HepG2 (cell line): ENCODE measurements at regions of chr19 and their contacts with region 1.

Region 1: GRCh38 chr19:46954993-46955812 is 64.4 kb upstream of the NPAS1 start:
- DNase-seq: peak; percentile 27
- ATAC-seq: no peak
- H3K4me3 ChIP-seq: peak overlapping the region; percentile 7 to 61 (median 25); a peak in 4 of 6 replicates
- H3K27ac ChIP-seq: peak overlapping the region; percentile 99
- H3K4me1 ChIP-seq: peaks cover 96% of the 10 kb centered on the region
- H3K27me3 ChIP-seq: no peaks in the 10 kb centered on the region
- CTCF ChIP-seq: no peak
- EP300 ChIP-seq: no peak
- POLR2A ChIP-seq: no peak
- RAD21 ChIP-seq: no peak

Region 2: DNA sequence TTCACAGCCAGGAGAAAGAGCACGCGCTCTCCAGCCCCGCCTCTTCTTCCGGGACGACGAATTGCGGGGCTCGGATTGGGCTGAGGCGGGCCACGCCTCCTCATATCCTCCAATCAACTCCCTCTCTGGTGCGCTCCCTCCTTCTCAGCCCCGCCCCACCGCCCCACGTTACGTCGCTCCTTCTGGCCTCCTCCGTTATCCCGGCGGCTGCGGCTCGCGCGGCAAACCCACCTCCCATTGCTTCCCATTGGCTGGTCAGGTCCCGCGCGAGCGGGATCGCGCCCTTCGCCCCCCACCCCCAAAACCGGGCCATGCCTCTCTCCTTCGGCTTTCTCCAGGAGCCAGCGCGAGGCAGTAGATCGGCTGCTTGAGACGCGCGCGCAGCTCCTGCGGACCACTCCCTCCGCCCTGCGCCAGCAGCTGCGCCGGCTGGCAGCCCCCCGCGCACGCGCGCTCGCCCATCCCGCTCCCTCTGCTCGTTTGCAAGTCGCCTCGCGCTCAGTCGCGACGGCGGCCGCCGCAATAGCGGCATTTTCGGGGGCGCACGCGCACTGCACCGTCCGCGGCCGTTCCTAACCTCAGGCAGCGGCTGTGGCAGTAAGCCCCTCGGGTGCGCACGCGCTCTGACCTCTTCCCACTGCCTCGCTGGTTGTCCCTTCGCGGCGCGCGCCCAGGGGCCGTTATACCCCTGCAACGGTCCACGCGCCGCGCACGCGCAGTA is 94.9 kb before region 1 on chr19:
- CTCF ChIA-PET with region 1: no interaction called
- POLR2A ChIA-PET with region 1: interaction called, 10 read pairs
- in situ Hi-C with region 1: no loop called
- intact Hi-C with region 1: loop called (anchors 5 kb)
- DNase-seq: peak; percentile 96
- ATAC-seq: peak; percentile 74
- H3K4me3 ChIP-seq: peak overlapping the region; percentile 67 to 83 (median 70); a peak in 5 of 6 replicates
- H3K27ac ChIP-seq: peak overlapping the region; percentile 100
- H3K4me1 ChIP-seq: peaks cover 62% of the 10 kb centered on the region
- H3K27me3 ChIP-seq: no peaks in the 10 kb centered on the region; a peak in 1 of 5 replicates
- CTCF ChIP-seq: 0 out of 2 replicates have a peak, but pooled peaks have one; percentile 16
- EP300 ChIP-seq: no peak; a peak in 1 of 4 replicates
- POLR2A ChIP-seq: peak; percentile 85 to 95
- RAD21 ChIP-seq: peak; percentile 79

Region 3: GRCh38 chr19:46890423-46891170 is 64.6 kb before region 1 on chr19:
- CTCF ChIA-PET with region 1: no interaction called
- POLR2A ChIA-PET with region 1: interaction called, 12 read pairs
- in situ Hi-C with region 1: no loop called
- intact Hi-C with region 1: no loop called
- DNase-seq: peak; percentile 99
- ATAC-seq: peak; percentile 97
- H3K4me3 ChIP-seq: peak overlapping the region in 2 of 3 experiments; percentile 8 to 42; a peak in 1 of 6 replicates
- H3K27ac ChIP-seq: peak overlapping the region; percentile 85
- H3K4me1 ChIP-seq: peaks cover 84% of the 10 kb centered on the region
- H3K27me3 ChIP-seq: no peaks in the 10 kb centered on the region
- CTCF ChIP-seq: peak; percentile 53
- EP300 ChIP-seq: peak; percentile 72 to 91; a peak in 3 of 4 replicates
- POLR2A ChIP-seq: peak; percentile 25 to 40; a peak in 2 of 4 replicates
- RAD21 ChIP-seq: peak; percentile 67

Region 4: DNA sequence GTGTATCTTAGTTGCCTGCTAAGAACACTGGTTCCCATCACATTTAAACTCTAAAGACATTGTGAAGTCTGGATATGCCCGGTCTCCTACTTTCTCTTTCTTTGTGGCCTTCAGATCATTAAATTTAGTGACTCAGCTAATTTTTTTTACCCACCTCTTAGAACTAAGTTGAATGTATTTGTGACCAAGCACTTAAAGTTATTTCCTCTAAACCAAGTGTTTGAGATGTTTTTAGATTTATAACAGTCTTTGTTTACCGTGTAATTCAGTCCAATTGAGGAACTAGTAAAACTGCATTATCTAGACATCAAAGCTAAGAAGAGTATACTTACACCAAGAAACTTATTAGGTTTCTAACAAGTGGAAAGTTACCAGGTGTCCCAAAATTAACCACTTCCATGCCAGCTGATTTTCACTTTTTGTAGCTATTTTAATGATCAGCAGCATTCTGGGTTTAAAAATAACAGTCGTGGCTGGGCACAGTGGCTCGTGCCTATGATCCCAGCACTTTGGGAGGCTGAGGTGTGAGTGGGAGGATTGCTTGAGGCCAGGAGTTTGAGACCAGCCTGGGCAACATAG is 41.3 kb before region 1 on chr19:
- CTCF ChIA-PET with region 1: no interaction called
- POLR2A ChIA-PET with region 1: no interaction called
- in situ Hi-C with region 1: no loop called
- intact Hi-C with region 1: no loop called
- DNase-seq: no peak
- ATAC-seq: no peak
- H3K4me3 ChIP-seq: no peak overlapping the region
- H3K27ac ChIP-seq: peak overlapping the region; percentile 20
- H3K4me1 ChIP-seq: peaks cover 59% of the 10 kb centered on the region
- H3K27me3 ChIP-seq: no peaks in the 10 kb centered on the region
- CTCF ChIP-seq: no peak
- EP300 ChIP-seq: no peak
- POLR2A ChIP-seq: no peak
- RAD21 ChIP-seq: no peak

Region 5: DNA sequence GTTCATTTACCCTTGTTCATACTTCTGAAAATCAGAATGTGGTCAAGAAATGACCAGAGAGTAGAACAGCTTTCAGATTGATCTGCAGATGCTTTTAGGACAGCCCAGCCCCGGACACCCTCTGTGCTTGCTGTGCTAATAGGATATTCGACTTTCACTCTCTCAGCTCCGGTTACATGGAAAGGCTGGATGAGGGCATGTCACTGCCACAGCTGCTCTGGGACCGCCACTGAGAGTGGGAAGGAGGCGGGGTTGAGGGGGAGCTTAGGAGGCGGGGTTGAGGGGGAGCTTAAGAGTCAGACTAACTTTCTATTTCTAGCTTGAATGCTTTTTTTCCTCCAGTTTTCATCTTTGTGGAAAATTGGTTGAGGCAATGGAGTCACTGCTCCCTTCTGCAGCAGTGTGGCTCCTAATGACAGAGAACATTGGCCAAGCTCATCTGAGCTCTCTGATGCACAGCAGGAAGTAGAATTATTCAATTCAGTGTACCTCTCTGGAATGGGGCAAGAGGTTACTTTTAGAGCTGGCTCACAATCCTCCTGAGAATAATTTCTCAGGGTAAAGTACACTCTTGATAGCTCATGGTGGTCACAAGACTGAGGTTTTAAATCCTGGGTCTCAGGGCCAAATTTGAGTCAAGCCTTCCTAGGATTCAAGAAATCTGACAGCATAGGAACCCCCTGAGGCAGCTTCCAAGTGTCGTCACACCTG is 10.1 kb before region 1 on chr19:
- CTCF ChIA-PET with region 1: no interaction called
- POLR2A ChIA-PET with region 1: interaction called, 28 read pairs
- in situ Hi-C with region 1: no loop called
- intact Hi-C with region 1: no loop called
- DNase-seq: no peak
- ATAC-seq: peak; percentile 54
- H3K4me3 ChIP-seq: no peak overlapping the region
- H3K27ac ChIP-seq: peak overlapping the region; percentile 58
- H3K4me1 ChIP-seq: peaks cover 80% of the 10 kb centered on the region
- H3K27me3 ChIP-seq: no peaks in the 10 kb centered on the region
- CTCF ChIP-seq: no peak
- EP300 ChIP-seq: no peak
- POLR2A ChIP-seq: no peak
- RAD21 ChIP-seq: no peak

Region 6: GRCh38 chr19:46970815-46971214 is 15.6 kb after region 1 on chr19:
- CTCF ChIA-PET with region 1: no interaction called
- POLR2A ChIA-PET with region 1: no interaction called
- in situ Hi-C with region 1: no loop called
- intact Hi-C with region 1: no loop called
- DNase-seq: no peak
- ATAC-seq: no peak
- H3K4me3 ChIP-seq: no peak overlapping the region
- H3K27ac ChIP-seq: no peak overlapping the region
- H3K4me1 ChIP-seq: peaks cover 23% of the 10 kb centered on the region
- H3K27me3 ChIP-seq: no peaks in the 10 kb centered on the region
- CTCF ChIP-seq: no peak
- EP300 ChIP-seq: no peak
- POLR2A ChIP-seq: no peak
- RAD21 ChIP-seq: no peak

Region 7: GRCh38 chr19:46984077-46985010 is 29.1 kb after region 1 on chr19:
- CTCF ChIA-PET with region 1: no interaction called
- POLR2A ChIA-PET with region 1: interaction called, 13 read pairs
- in situ Hi-C with region 1: no loop called
- intact Hi-C with region 1: loop called (anchors 1 kb)
- DNase-seq: peak; percentile 90
- ATAC-seq: peak; percentile 88
- H3K4me3 ChIP-seq: peak overlapping the region in 2 of 3 experiments; percentile 8 to 52; a peak in 3 of 6 replicates
- H3K27ac ChIP-seq: peak overlapping the region; percentile 79
- H3K4me1 ChIP-seq: peaks cover 35% of the 10 kb centered on the region
- H3K27me3 ChIP-seq: no peaks in the 10 kb centered on the region
- CTCF ChIP-seq: peak; percentile 16; the same call in 1 of the 2 replicates
- EP300 ChIP-seq: peak in 1 of 2 experiments; percentile 81; a peak in 2 of 4 replicates
- POLR2A ChIP-seq: peak in 1 of 2 experiments; percentile 51; a peak in 1 of 4 replicates
- RAD21 ChIP-seq: 0 out of 2 replicates have a peak, but pooled peaks have one; percentile 34

Region 8: GRCh38 chr19:47047763-47048405 is 92.7 kb after region 1 on chr19:
- CTCF ChIA-PET with region 1: no interaction called
- POLR2A ChIA-PET with region 1: no interaction called
- in situ Hi-C with region 1: no loop called
- intact Hi-C with region 1: no loop called
- DNase-seq: peak; percentile 93
- ATAC-seq: peak; percentile 89
- H3K4me3 ChIP-seq: peak overlapping the region; percentile 68 to 81 (median 73); a peak in 5 of 6 replicates
- H3K27ac ChIP-seq: peak overlapping the region; percentile 66
- H3K4me1 ChIP-seq: peaks cover 15% of the 10 kb centered on the region
- H3K27me3 ChIP-seq: no peaks in the 10 kb centered on the region
- CTCF ChIP-seq: no peak
- EP300 ChIP-seq: no peak
- POLR2A ChIP-seq: peak; percentile 74 to 86
- RAD21 ChIP-seq: no peak